Activated CD4-positive, alpha-beta memory T cell treated with anti-CD3 and anti-CD28 coated beads, Interleukin-2, amount 10 ng/mL, durations not matched to agents 7 days and 5 days (primary cell): ENCODE measurements at regions of chr17 and their contacts with region 1.

Region 1: GRCh38 chr17:68468334-68468733 is 11.0 kb upstream of the WIPI1 start:
- DNase-seq: no peak
- H3K4me3 Mint-ChIP-seq: no peak overlapping the region
- H3K27ac Mint-ChIP-seq: no peak overlapping the region
- H3K4me1 Mint-ChIP-seq: peaks cover 11% of the 10 kb centered on the region
- H3K27me3 Mint-ChIP-seq: peaks cover 29% of the 10 kb centered on the region

Region 2: DNA sequence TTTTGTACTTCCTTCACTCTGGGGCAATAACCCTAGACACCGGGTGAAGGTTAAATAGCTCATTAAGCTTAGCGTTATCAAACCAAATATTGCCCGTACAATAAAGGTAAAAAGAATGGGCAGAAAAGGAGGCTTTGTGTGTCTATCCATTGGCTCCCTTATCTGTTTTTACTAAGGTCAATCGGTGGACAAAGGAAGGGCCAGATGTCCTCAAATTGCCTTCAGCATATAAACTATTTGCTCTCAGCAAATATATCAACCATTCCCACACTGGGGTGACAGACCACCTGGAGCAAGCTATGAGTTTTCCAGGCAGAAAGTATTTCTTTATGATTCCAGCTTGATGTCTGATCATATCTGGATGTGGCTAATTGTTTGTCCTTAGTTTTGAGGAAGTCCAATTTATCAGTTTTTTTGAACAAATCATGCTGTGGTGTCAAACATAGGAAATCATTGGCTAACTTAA is 14.3 kb after region 1 on chr17:
- CTCF ChIA-PET with region 1: interaction called, 23 read pairs
- POLR2A ChIA-PET with region 1: no interaction called
- DNase-seq: no peak
- H3K4me3 Mint-ChIP-seq: no peak overlapping the region
- H3K27ac Mint-ChIP-seq: no peak overlapping the region
- H3K4me1 Mint-ChIP-seq: peaks cover 18% of the 10 kb centered on the region
- H3K27me3 Mint-ChIP-seq: peaks cover 47% of the 10 kb centered on the region

Region 3: GRCh38 chr17:68491381-68492231 is 23.3 kb after region 1 on chr17:
- CTCF ChIA-PET with region 1: interaction called, 14 read pairs
- POLR2A ChIA-PET with region 1: no interaction called
- DNase-seq: no peak
- H3K4me3 Mint-ChIP-seq: no peak overlapping the region
- H3K27ac Mint-ChIP-seq: no peak overlapping the region
- H3K4me1 Mint-ChIP-seq: peaks cover 23% of the 10 kb centered on the region
- H3K27me3 Mint-ChIP-seq: peaks cover 11% of the 10 kb centered on the region

Region 4: DNA sequence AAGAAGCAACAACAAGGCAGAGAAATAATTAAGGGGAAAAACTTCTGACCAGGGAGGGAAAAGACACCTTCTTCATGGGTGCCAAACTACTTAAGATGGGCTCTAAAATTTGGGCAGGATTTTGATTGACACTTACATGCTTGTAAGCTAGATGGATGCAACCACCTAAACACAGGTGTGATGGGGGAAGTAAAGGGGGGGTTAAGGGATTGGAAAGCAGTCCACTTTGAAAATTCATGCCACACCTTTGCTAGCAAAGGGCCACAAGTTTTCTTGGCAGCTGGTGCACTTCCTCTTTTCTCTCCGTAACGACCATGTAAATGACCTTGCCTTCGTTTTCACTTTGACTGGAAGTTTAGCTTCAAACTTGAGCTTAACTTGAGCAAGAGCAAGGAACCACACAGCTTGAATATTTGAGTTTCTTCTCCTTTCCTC is 29.6 kb after region 1 on chr17:
- CTCF ChIA-PET with region 1: interaction called, 14 read pairs
- POLR2A ChIA-PET with region 1: no interaction called
- DNase-seq: peak; percentile 27
- H3K4me3 Mint-ChIP-seq: peak overlapping the region; percentile 12
- H3K27ac Mint-ChIP-seq: peak overlapping the region; percentile 64
- H3K4me1 Mint-ChIP-seq: peaks cover 47% of the 10 kb centered on the region
- H3K27me3 Mint-ChIP-seq: peaks cover 6% of the 10 kb centered on the region